Activated T-helper 2 cell treated with anti-CD3 and anti-CD28 coated beads, Interferon-gamma antibody, Interleukin-2, Interleukin-4, amounts not matched to agents 10 μg/mL and 5 μg/mL and 100 μg/mL, durations not matched to agents 14 hours and 24 hours and 36 hours (primary cell): ENCODE measurements at regions of chr9 and their contacts with region 1.

Region 1: GRCh38 chr9:93453047-93453914 is at the start of gene FAM120AOS:
- DNase-seq: peak; percentile 79
- H3K4me3 Mint-ChIP-seq: peak within 1 kb of the TSS; percentile 92
- H3K27ac Mint-ChIP-seq: peak within 1 kb of the TSS; percentile 93
- H3K4me1 Mint-ChIP-seq: peaks cover 44% of the 10 kb centered on the region
- H3K27me3 Mint-ChIP-seq: no peaks in the 10 kb centered on the region
- total RNA-seq, gene FAM120AOS: 40.9 and 41.1 TPM in 2 replicates

Region 2: DNA sequence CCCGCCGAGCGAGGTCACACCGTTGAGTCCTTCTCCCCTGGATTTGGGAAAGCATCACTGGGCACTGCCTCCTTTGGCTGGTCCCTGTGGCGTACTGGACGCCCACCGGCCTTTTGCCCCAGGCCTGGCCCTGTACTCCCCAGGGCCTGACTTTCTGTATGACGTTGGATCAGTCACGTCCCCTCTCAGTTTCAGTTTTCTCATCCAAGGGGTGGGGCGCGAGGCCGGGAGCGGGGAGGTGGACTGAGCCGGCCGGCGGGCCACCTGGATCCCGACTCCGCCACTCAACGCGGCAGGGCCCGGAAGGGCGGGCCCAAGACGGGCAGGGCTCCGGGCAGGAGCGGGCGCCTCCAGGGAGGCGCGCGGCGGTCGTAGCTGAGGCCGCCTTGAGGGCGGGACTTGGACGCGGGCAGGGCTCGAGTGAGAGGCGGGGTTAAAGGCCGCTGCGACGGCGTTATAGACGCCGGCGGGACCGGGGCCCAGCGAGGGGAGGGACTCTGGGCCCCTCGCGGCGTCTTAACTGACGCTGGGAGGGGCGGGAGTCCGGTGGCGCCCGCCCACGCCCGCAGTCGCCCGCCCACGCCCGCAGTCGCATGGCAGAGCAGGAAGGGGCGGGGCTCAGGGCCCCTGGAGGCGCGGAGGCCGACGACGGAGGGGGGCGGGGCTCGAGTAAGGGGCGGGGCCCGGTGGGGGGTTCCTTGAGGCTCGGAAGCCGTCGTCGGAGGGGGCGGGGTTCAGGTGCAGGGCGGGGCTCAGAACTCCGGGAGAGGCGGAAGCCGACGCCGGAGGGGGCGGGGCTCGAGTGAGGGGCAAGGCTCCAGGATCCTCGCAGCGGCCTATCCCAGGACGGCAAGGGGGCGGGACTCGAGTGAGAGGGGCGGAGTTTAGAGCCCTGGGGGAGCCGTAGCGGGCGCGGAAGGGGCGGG is 357.8 kb before region 1 on chr9:
- intact Hi-C with region 1: loop called (anchors 2 kb)
- DNase-seq: peak; percentile 100
- H3K4me3 Mint-ChIP-seq: peak overlapping the region; percentile 83
- H3K27ac Mint-ChIP-seq: peak overlapping the region; percentile 98
- H3K4me1 Mint-ChIP-seq: peaks cover 66% of the 10 kb centered on the region
- H3K27me3 Mint-ChIP-seq: no peaks in the 10 kb centered on the region

Region 3: GRCh38 chr9:93387791-93388190 is 65.5 kb before region 1 on chr9:
- intact Hi-C with region 1: no loop called
- DNase-seq: no peak
- H3K4me3 Mint-ChIP-seq: no peak overlapping the region
- H3K27ac Mint-ChIP-seq: no peak overlapping the region
- H3K4me1 Mint-ChIP-seq: no peaks in the 10 kb centered on the region
- H3K27me3 Mint-ChIP-seq: peaks cover 11% of the 10 kb centered on the region

Region 4: DNA sequence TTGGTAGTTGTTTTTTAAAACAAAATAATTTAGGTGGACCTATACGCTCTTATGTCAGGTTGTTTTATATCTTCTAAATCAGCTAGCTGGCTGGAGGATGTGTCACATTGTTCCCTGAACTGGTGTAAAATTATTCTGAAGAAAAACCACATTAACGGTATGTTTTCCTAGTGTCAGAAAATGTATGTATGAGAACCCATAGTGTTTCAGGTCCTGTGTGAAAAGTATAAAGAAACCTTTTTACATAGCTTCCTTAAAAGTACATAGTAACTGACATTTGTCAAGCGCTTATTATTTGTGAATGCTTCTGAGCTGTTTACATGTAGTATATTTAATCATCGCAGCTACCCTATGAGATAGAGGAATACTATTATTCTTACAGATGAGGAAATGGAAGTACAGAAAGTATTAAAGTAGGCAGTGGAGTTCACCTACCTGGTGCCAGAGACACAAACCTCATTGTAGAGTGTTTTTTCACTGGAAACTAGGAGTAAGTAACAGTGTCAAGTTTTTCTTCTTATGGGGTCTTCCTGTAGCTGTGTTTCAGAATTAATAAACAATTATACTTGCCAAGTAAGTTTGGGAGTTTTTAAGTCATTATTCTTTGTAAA is 10.5 kb after region 1 on chr9:
- intact Hi-C with region 1: loop called (anchors 1 kb)
- DNase-seq: no peak
- H3K4me3 Mint-ChIP-seq: peak overlapping the region; percentile 72
- H3K27ac Mint-ChIP-seq: peak overlapping the region; percentile 87
- H3K4me1 Mint-ChIP-seq: peaks cover 88% of the 10 kb centered on the region
- H3K27me3 Mint-ChIP-seq: no peaks in the 10 kb centered on the region

Region 5: GRCh38 chr9:93566408-93567270 is 113.4 kb after region 1 on chr9:
- intact Hi-C with region 1: loop called (anchors 2 kb)
- DNase-seq: peak; percentile 98
- H3K4me3 Mint-ChIP-seq: peak overlapping the region; percentile 82
- H3K27ac Mint-ChIP-seq: peak overlapping the region; percentile 85
- H3K4me1 Mint-ChIP-seq: peaks cover 26% of the 10 kb centered on the region
- H3K27me3 Mint-ChIP-seq: no peaks in the 10 kb centered on the region

Region 6: GRCh38 chr9:93713716-93714115 is 260.4 kb after region 1 on chr9:
- intact Hi-C with region 1: no loop called
- DNase-seq: no peak
- H3K4me3 Mint-ChIP-seq: no peak overlapping the region
- H3K27ac Mint-ChIP-seq: no peak overlapping the region
- H3K4me1 Mint-ChIP-seq: peaks cover 5% of the 10 kb centered on the region
- H3K27me3 Mint-ChIP-seq: no peaks in the 10 kb centered on the region